Activated CD4-positive, alpha-beta memory T cell treated with anti-CD3 and anti-CD28 coated beads for 36 hours (primary cell): ENCODE measurements at regions of chr1 and their contacts with region 1.

Region 1: GRCh38 chr1:32981003-32981901 is 16.6 kb upstream of the RNF19B start:
- DNase-seq: peak; percentile 84
- H3K4me3 Mint-ChIP-seq: peak overlapping the region; percentile 53
- H3K27ac Mint-ChIP-seq: peak overlapping the region; percentile 88
- H3K4me1 Mint-ChIP-seq: peaks cover 57% of the 10 kb centered on the region
- H3K27me3 Mint-ChIP-seq: no peaks in the 10 kb centered on the region

Region 2: DNA sequence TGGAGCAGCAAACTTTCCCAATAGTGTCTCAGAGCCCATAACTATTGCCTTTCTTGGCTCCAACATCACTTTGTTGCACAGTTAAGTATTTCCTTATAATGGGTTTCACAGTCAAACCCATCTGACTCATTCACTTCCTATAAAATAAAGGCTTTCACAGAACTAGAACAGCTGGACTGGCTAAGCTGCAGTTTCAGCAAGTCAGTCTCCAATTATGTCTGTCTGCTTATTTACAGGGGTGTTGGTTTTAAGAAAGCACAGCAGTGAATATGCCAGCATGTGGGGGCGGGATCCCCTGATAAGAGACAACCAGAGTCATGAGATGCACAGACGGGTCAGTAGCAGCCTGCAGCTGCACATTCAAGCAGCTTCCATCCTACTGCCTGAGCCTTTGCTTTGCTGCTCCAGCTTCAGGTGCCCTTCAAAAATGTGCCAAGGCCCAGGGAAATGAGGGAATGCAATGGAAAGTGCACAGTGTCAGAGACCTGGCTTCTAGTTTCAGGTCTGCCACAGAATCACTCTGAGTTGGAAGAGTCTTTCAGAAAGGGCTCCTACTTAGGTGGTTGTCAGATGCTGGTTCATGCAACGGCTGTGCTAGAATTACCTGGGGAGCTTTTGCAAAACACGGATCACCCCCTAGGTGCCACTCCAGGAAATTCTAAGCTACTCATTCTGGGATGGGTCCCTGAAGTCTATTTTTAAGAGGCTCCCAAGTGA is 41.4 kb before region 1 on chr1:
- CTCF ChIA-PET with region 1: no interaction called
- POLR2A ChIA-PET with region 1: no interaction called
- intact Hi-C with region 1: no loop called
- DNase-seq: peak; percentile 65
- H3K4me3 Mint-ChIP-seq: no peak overlapping the region
- H3K27ac Mint-ChIP-seq: peak overlapping the region; percentile 72
- H3K4me1 Mint-ChIP-seq: peaks cover 43% of the 10 kb centered on the region
- H3K27me3 Mint-ChIP-seq: no peaks in the 10 kb centered on the region

Region 3: DNA sequence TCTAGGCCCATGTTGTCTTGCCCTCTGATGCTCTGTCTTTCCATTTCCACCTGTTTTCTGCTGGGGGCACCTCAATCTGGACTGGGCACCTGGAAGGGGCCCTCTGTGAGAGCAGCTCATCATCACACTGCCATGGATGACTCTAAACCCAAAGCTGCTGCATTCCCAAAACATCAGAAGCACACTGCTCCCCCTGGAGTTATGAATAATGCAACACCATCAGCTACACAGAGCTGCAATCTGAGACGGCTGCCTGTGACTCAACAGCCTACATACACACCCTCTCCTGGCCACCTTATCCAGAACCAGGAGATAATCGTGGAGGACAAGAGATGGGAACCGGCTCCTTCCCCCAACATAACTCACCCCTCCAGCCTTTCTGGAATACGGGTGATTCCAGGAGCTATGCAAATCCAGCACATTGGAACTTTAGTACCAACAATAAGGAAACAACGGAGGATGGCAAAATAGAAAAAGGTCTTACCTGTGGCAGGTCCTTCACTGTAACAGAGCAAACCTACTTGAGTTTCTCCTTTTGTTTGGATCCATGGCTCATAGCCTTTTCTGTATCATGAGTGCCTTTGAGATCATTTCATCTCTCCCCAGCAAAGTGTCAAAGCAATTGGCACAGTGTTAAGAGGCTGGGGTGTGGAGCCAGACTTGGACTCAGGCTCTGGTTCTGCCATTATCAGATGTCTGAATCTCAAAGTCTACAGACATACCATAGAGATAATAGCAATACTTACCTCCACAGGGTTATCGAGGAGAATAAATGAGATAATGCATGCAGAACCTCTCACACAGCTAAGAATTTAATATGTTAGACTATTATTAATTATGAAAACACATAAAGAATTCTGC is 26.2 kb after region 1 on chr1:
- CTCF ChIA-PET with region 1: interaction called, 4 read pairs
- POLR2A ChIA-PET with region 1: interaction called, 5 read pairs
- intact Hi-C with region 1: loop called (anchors 1 kb)
- DNase-seq: peak; percentile 40
- H3K4me3 Mint-ChIP-seq: no peak overlapping the region
- H3K27ac Mint-ChIP-seq: no peak overlapping the region
- H3K4me1 Mint-ChIP-seq: peaks cover 41% of the 10 kb centered on the region
- H3K27me3 Mint-ChIP-seq: no peaks in the 10 kb centered on the region